ENCODE measurements at regions of chr11 and their contacts with region 1.

Region 1: GRCh38 chr11:304915-305843 is 2.4 kb upstream of the IFITM2 start:
- DNase-seq: peak; percentile 76
- H3K4me3 Mint-ChIP-seq: no peak overlapping the region
- H3K27ac Mint-ChIP-seq: peak overlapping the region; percentile 5
- H3K4me1 Mint-ChIP-seq: peaks cover 38% of the 10 kb centered on the region
- H3K27me3 Mint-ChIP-seq: peaks cover 3% of the 10 kb centered on the region

Region 2: GRCh38 chr11:213178-213577 is 92.0 kb before region 1 on chr11:
- CTCF ChIA-PET with region 1: no interaction called
- POLR2A ChIA-PET with region 1: no interaction called
- intact Hi-C with region 1: no loop called
- DNase-seq: no peak
- H3K4me3 Mint-ChIP-seq: no peak overlapping the region
- H3K27ac Mint-ChIP-seq: no peak overlapping the region
- H3K4me1 Mint-ChIP-seq: peaks cover 27% of the 10 kb centered on the region
- H3K27me3 Mint-ChIP-seq: no peaks in the 10 kb centered on the region

Region 3: DNA sequence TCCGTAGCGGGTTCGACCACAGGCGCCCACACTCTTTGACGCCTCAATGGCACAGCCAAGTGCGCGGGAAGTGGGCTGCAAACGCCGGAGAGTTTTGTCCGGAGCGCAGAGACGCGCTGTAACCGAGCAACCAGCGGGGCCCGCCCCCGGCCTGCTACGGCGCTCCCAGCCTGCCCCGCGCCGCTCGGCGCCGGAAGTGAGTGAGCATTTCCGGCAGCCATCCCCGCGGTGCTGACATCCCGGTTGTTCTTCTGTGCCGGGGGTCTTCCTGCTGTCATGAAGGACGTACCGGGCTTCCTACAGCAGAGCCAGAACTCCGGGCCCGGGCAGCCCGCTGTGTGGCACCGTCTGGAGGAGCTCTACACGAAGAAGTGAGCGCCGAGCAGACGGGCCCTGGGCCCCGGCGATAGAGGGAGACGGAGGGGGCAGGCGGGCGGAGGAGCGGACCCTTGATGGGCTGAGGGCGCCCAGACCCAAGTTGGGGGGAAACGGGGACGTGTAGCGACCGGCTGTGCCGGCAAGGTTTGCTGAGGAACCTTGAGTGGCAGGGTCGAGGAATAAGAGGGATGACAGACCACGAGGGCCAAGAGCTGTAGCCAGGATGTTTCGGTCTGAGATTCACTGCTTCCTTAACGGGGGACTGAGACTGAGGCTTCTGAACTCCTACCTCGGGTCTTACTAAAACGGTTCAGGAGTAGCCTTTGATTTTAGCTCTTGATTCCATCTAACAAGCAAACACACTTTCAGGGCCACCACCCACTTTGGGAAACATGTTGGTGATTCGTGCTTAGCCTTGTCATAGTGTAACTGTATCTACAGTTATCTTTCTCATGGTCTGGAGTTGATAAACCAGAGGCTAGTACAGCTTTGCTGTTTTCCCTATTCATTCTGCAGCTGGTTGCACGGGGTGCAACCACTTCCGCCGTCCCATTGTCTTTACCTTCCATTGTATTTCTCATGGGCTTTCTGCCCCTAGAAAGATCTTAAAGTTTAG is 68.1 kb before region 1 on chr11 and contains the start of gene PSMD13:
- CTCF ChIA-PET with region 1: interaction called, 10 read pairs
- POLR2A ChIA-PET with region 1: no interaction called
- intact Hi-C with region 1: no loop called
- DNase-seq: peak; percentile 93
- H3K4me3 Mint-ChIP-seq: peak within 1 kb of the TSS; percentile 97
- H3K27ac Mint-ChIP-seq: peak within 1 kb of the TSS; percentile 94
- H3K4me1 Mint-ChIP-seq: peaks cover 49% of the 10 kb centered on the region
- H3K27me3 Mint-ChIP-seq: no peaks in the 10 kb centered on the region
- total RNA-seq, gene PSMD13: 210 to 214 TPM

Region 4: DNA sequence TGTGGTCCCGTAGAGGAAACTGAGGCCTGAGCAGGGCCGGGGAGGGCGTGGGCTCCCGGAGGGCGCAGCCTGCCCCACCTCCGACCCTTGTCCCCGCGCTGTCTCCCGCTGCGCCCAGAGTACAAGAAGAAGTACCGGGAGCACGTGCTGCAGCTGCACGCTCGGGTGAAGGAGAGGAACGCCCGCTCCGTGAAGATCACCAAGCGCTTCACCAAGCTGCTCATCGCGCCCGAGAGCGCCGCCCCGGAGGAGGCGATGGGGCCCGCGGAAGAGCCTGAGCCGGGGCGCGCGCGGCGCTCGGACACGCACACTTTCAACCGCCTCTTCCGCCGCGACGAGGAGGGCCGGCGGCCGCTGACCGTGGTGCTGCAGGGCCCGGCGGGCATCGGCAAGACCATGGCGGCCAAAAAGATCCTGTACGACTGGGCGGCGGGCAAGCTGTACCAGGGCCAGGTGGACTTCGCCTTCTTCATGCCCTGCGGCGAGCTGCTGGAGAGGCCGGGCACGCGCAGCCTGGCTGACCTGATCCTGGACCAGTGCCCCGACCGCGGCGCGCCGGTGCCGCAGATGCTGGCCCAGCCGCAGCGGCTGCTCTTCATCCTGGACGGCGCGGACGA is 25.1 kb before region 1 on chr11:
- CTCF ChIA-PET with region 1: interaction called, 13 read pairs
- POLR2A ChIA-PET with region 1: no interaction called
- intact Hi-C with region 1: no loop called
- DNase-seq: peak; percentile 62
- H3K4me3 Mint-ChIP-seq: peak overlapping the region; percentile 68
- H3K27ac Mint-ChIP-seq: peak overlapping the region; percentile 54
- H3K4me1 Mint-ChIP-seq: peaks cover 50% of the 10 kb centered on the region
- H3K27me3 Mint-ChIP-seq: peaks cover 18% of the 10 kb centered on the region

Region 5: DNA sequence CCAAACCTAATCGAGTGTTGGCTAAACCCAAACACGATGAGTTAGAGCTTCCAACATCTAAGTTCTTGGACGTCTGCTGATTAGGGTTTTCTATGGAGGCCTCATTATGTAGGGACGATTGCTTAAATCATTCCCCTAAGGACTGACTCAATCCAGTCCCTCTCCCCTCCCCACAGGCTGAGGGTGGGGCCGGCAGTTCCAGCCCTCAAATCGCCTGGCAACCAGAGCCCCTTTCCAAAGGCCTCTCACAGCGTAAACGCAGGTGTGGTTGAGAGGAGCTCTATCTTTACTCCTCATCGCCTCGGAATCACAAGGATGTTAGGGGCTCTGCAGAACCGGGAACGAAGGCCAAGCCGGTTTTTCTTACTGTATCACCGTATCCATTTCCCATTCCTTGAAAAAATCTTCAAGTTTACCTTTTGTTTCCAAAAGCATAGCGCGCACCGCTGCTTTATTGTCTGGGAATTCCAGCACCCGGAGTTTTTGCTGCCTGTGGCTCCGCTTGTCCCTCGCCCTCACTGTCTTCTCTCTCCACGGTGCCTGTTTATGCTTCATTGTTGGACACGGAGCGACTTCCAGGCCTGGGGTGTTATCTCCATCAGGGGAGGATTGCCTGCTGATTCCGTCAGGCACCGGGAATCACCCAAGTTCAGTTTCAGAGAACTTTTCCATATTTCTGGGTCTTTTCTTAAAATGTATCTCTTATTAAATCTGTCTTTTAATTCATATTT is 29.2 kb after region 1 on chr11:
- CTCF ChIA-PET with region 1: no interaction called
- POLR2A ChIA-PET with region 1: no interaction called
- intact Hi-C with region 1: no loop called
- DNase-seq: no peak
- H3K4me3 Mint-ChIP-seq: no peak overlapping the region
- H3K27ac Mint-ChIP-seq: no peak overlapping the region
- H3K4me1 Mint-ChIP-seq: peaks cover 34% of the 10 kb centered on the region
- H3K27me3 Mint-ChIP-seq: no peaks in the 10 kb centered on the region

Region 6: GRCh38 chr11:355581-356458 is 50.6 kb after region 1 on chr11:
- CTCF ChIA-PET with region 1: interaction called, 17 read pairs
- POLR2A ChIA-PET with region 1: interaction called, 5 read pairs
- intact Hi-C with region 1: loop called (anchors 2 kb)
- DNase-seq: peak; percentile 92
- H3K4me3 Mint-ChIP-seq: no peak overlapping the region
- H3K27ac Mint-ChIP-seq: no peak overlapping the region
- H3K4me1 Mint-ChIP-seq: peaks cover 32% of the 10 kb centered on the region
- H3K27me3 Mint-ChIP-seq: no peaks in the 10 kb centered on the region

Region 7: GRCh38 chr11:447923-448731 is 142.9 kb after region 1 on chr11:
- CTCF ChIA-PET with region 1: interaction called, 7 read pairs
- POLR2A ChIA-PET with region 1: no interaction called
- intact Hi-C with region 1: loop called (anchors 5 kb)
- DNase-seq: peak; percentile 97
- H3K4me3 Mint-ChIP-seq: peak overlapping the region; percentile 90
- H3K27ac Mint-ChIP-seq: peak overlapping the region; percentile 95
- H3K4me1 Mint-ChIP-seq: peaks cover 21% of the 10 kb centered on the region
- H3K27me3 Mint-ChIP-seq: peaks cover 2% of the 10 kb centered on the region